ENCODE measurements at regions of chr14 and their contacts with region 1.

Region 1: DNA sequence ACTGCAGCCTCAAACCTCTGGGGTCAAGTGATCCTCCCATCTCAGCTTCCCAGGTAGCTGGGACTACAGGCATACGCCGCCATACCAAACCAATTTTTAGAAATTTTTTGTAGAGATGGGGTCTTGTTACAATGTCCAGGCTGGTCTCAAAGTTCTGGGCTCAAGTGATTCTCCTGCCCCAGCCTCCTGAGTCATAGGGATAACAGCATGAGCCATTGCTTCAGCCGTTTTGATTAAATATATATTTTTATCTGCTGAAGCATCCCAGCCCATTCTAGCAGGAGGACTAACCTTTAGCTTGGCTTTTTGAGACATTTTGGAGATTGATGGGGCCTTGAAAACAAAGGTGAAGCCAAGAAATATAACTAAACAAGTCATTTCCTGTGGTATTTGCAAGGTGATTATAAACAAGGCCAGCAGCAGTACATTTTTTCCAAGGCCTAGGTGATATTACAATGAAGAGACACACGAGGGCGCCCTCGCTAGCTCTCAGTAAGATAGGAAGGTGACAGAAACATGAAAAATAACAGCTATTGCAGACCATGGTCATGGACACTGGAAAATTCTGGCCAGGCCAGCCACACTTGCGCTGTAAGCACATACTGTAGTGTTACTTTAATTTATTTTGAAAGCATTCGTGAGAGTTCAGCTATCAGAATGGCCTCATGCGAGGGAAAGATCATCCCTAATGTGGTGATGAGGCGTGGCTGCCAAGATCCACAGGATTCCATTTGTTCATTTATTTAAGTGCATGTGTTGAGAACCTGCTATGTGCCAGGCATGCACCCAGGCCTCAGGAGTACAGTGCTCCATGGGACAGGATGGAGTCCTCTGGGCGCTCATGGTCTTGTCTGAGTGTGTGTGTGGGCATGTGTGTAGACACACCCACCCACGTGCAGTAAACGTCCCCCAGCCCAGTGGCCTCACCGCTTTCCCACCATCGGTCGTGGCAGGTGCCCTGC is 63.5 kb downstream of the DGLUCY start:
- DNase-seq: peak; percentile 88
- H3K4me3 ChIP-seq: no peak overlapping the region
- H3K27ac ChIP-seq: no peak overlapping the region
- H3K4me1 ChIP-seq: peaks cover 4% of the 10 kb centered on the region
- H3K27me3 ChIP-seq: no peaks in the 10 kb centered on the region
- CTCF ChIP-seq: peak; percentile 69 to 74
- POLR2A ChIP-seq: no peak

Region 2: GRCh38 chr14:90903101-90903500 is 274.3 kb before region 1 on chr14:
- CTCF ChIA-PET with region 1: interaction called, 388 read pairs
- POLR2A ChIA-PET with region 1: no interaction called
- dilution Hi-C with region 1: no loop called
- intact Hi-C with region 1: loop called (anchors 1 kb)
- DNase-seq: peak; percentile 72
- H3K4me3 ChIP-seq: no peak overlapping the region
- H3K27ac ChIP-seq: no peak overlapping the region
- H3K4me1 ChIP-seq: no peaks in the 10 kb centered on the region
- H3K27me3 ChIP-seq: no peaks in the 10 kb centered on the region
- CTCF ChIP-seq: peak; percentile 59 to 66
- POLR2A ChIP-seq: no peak

Region 3: GRCh38 chr14:90963343-90963742 is 214.0 kb before region 1 on chr14:
- CTCF ChIA-PET with region 1: no interaction called
- POLR2A ChIA-PET with region 1: no interaction called
- dilution Hi-C with region 1: no loop called
- intact Hi-C with region 1: no loop called
- DNase-seq: no peak
- H3K4me3 ChIP-seq: no peak overlapping the region
- H3K27ac ChIP-seq: no peak overlapping the region
- H3K4me1 ChIP-seq: peaks cover 8% of the 10 kb centered on the region
- H3K27me3 ChIP-seq: no peaks in the 10 kb centered on the region
- CTCF ChIP-seq: no peak
- POLR2A ChIP-seq: no peak

Region 4: GRCh38 chr14:91138511-91139359 is 38.6 kb before region 1 on chr14:
- CTCF ChIA-PET with region 1: interaction called, 71 read pairs
- POLR2A ChIA-PET with region 1: no interaction called
- dilution Hi-C with region 1: no loop called
- intact Hi-C with region 1: loop called (anchors 1 kb)
- DNase-seq: peak; percentile 82
- H3K4me3 ChIP-seq: no peak overlapping the region
- H3K27ac ChIP-seq: no peak overlapping the region
- H3K4me1 ChIP-seq: peaks cover 22% of the 10 kb centered on the region
- H3K27me3 ChIP-seq: no peaks in the 10 kb centered on the region
- CTCF ChIP-seq: peak; percentile 45 to 52
- POLR2A ChIP-seq: no peak

Region 5: GRCh38 chr14:91202234-91202974 is 25.1 kb after region 1 on chr14:
- CTCF ChIA-PET with region 1: interaction called, 15 read pairs
- POLR2A ChIA-PET with region 1: no interaction called
- dilution Hi-C with region 1: no loop called
- intact Hi-C with region 1: no loop called
- DNase-seq: peak; percentile 47
- H3K4me3 ChIP-seq: peak overlapping the region in 1 of 3 experiments; percentile 11
- H3K27ac ChIP-seq: peak overlapping the region; percentile 69
- H3K4me1 ChIP-seq: peaks cover 12% of the 10 kb centered on the region
- H3K27me3 ChIP-seq: no peaks in the 10 kb centered on the region
- CTCF ChIP-seq: no peak
- POLR2A ChIP-seq: no peak

Region 6: DNA sequence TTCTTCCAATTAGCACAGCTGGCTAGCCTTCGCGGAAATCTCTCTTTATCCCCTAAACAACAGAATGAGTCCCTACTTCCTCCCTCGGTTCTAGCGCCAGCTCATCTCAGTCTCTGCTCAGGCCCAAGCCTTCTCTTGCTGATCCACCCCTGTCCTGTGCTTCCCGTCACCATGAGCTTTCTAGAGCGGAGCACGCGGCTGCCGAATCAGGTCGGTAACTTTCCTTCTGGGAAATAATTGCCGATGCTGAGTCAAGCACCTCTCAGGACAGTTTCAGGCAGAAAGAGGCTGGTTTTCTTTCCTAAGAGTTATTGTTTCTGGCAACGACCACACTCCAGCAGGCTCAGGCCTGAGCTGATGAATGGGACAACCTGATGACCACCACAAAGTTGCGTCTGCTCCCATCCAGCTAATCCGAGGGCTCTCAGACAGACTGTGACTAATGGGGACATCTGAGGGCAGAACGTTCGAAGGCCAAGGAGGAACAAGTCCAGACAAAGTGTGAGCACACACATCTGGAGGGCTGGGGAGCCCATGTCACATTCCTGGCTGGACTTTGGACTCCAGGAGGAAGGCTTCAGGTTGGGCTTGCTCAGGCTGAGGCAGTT is 80.8 kb after region 1 on chr14:
- CTCF ChIA-PET with region 1: interaction called, 22 read pairs
- POLR2A ChIA-PET with region 1: no interaction called
- dilution Hi-C with region 1: no loop called
- intact Hi-C with region 1: no loop called
- DNase-seq: peak; percentile 59
- H3K4me3 ChIP-seq: no peak overlapping the region
- H3K27ac ChIP-seq: no peak overlapping the region
- H3K4me1 ChIP-seq: peaks cover 7% of the 10 kb centered on the region
- H3K27me3 ChIP-seq: no peaks in the 10 kb centered on the region
- CTCF ChIP-seq: no peak
- POLR2A ChIP-seq: no peak

Region 7: DNA sequence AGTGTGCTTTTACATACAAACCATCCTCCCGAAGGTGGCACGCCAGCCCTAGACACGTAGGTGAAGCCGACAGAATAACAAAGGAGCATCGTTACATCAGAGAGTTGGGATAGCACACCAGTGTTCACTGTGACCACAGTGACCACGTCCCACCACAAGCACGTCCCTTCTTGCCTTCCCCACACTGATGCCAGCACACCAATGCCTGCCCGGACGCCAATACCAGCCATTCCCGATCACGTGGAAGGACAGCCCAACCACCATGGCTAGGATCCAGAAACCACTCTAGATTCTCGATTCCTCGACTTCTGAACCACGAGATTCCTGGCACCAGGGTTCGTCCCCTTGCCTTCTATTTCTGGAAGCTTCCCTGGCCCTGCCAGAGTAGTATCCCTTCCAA is 115.1 kb after region 1 on chr14:
- CTCF ChIA-PET with region 1: interaction called, 220 read pairs
- POLR2A ChIA-PET with region 1: no interaction called
- dilution Hi-C with region 1: no loop called
- intact Hi-C with region 1: no loop called
- DNase-seq: no peak
- H3K4me3 ChIP-seq: no peak overlapping the region
- H3K27ac ChIP-seq: no peak overlapping the region
- H3K4me1 ChIP-seq: no peaks in the 10 kb centered on the region
- H3K27me3 ChIP-seq: no peaks in the 10 kb centered on the region
- CTCF ChIP-seq: no peak
- POLR2A ChIP-seq: no peak

Region 8: GRCh38 chr14:91872011-91872501 is 694.7 kb after region 1 on chr14:
- CTCF ChIA-PET with region 1: no interaction called
- POLR2A ChIA-PET with region 1: no interaction called
- dilution Hi-C with region 1: no loop called
- intact Hi-C with region 1: no loop called
- DNase-seq: peak; percentile 19
- H3K4me3 ChIP-seq: no peak overlapping the region
- H3K27ac ChIP-seq: no peak overlapping the region
- H3K4me1 ChIP-seq: peaks cover 7% of the 10 kb centered on the region
- H3K27me3 ChIP-seq: no peaks in the 10 kb centered on the region
- CTCF ChIP-seq: no peak
- POLR2A ChIP-seq: no peak